ENCODE measurements at regions of chr6 and their contacts with region 1.

Region 1: GRCh38 chr6:32244946-32245398 is 21.1 kb upstream of the NOTCH4 start:
- H3K4me3 ChIP-seq: no peak overlapping the region
- H3K27ac ChIP-seq: no peak overlapping the region
- H3K4me1 ChIP-seq: no peaks in the 10 kb centered on the region
- CTCF ChIP-seq: peak; percentile 87

Region 2: GRCh38 chr6:32133786-32134185 is 111.2 kb before region 1 on chr6:
- CTCF ChIA-PET with region 1: no interaction called
- POLR2A ChIA-PET with region 1: interaction called, 11 read pairs
- H3K4me3 ChIP-seq: no peak overlapping the region
- H3K27ac ChIP-seq: no peak overlapping the region
- H3K4me1 ChIP-seq: peaks cover 8% of the 10 kb centered on the region
- CTCF ChIP-seq: no peak

Region 3: GRCh38 chr6:32234934-32235333 is 10.0 kb before region 1 on chr6:
- CTCF ChIA-PET with region 1: interaction called, 10 read pairs
- POLR2A ChIA-PET with region 1: no interaction called
- H3K4me3 ChIP-seq: no peak overlapping the region
- H3K27ac ChIP-seq: no peak overlapping the region
- H3K4me1 ChIP-seq: no peaks in the 10 kb centered on the region
- CTCF ChIP-seq: no peak

Region 4: DNA sequence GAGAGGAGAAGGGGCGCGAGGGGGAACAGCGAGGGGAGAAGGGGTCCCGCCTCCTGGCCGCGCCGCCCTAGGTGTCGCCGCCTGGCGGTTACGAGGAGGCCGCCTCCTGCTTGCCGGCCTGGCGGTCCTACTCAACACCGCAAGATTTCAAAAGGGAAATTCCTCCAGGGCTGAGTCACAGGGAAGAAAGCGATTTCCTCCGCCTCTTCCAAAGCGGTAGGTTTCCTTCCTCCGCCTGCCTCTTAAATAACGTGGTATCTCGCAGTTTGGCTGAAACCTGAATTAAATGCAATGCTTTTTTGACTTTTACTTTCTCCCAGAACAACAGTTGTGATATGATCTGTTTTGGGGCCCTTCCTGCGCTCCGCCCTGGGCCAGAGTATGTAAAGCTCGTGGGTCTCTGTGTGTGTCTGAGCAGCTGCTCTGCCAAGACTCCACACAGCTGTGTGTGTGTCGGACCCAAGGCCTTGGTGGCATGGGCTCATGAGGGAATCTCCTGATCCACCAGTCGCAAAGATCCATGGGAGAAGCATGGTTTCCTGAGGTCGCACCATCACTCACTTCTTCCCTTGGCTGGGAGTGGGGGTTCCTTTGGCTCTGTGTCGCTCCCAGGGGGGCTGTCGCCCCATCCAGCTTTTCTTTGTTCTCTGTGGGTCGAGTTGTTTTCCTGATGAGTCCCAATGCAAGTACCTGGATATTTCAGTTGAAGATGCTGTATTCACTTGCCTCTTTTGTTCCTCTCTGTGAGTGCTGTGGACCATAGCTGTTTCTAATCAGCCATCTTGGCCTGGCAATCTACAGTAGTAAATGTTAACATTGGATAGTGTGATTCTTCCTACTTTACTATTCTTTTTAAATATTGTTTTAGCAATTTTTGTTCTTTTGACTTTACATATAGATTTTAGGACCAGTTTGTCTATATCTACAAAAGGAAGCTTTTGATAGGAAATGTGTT is 10.5 kb after region 1 on chr6:
- CTCF ChIA-PET with region 1: interaction called, 60 read pairs
- POLR2A ChIA-PET with region 1: no interaction called
- H3K4me3 ChIP-seq: peak overlapping the region; percentile 25
- H3K27ac ChIP-seq: 0 out of 2 replicates have a peak overlapping the region, but pooled peaks have one; percentile 30
- H3K4me1 ChIP-seq: no peaks in the 10 kb centered on the region
- CTCF ChIP-seq: no peak

Region 5: GRCh38 chr6:32432050-32432450 is 187.1 kb after region 1 on chr6:
- CTCF ChIA-PET with region 1: interaction called, 12 read pairs
- POLR2A ChIA-PET with region 1: no interaction called
- H3K4me3 ChIP-seq: no peak overlapping the region
- H3K27ac ChIP-seq: no peak overlapping the region
- H3K4me1 ChIP-seq: no peaks in the 10 kb centered on the region
- CTCF ChIP-seq: no peak

Measured in HEK293 (cell line).